ENCODE measurements at regions of chr12 and their contacts with region 1.

Region 1: DNA sequence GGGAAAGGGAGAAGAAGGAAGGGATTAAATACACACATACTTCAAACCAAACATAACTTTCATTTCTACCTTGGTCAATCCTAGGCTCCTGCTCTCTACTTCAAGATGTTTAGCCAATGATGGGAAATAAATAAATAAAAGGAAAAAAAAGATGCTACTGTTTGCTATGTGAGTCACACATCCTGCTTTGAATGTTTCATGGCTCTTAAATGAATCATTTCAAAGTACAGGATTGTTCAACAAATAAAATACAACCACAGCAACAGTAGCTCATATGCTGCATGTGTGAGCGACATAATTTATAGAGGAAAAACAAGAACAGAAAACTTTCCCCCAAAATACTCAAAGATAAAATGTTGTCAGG is 54.3 kb upstream of the NPFF start:
- DNase-seq: peak; percentile 81
- H3K4me3 ChIP-seq: no peak overlapping the region
- H3K27ac ChIP-seq: peak overlapping the region; percentile 61
- H3K4me1 ChIP-seq: peaks cover 23% of the 10 kb centered on the region
- H3K27me3 ChIP-seq: no peaks in the 10 kb centered on the region
- CTCF ChIP-seq: no peak

Region 2: GRCh38 chr12:53391729-53392128 is 169.8 kb before region 1 on chr12:
- CTCF ChIA-PET with region 1: no interaction called
- dilution Hi-C with region 1: no loop called
- in situ Hi-C with region 1: no loop called
- intact Hi-C with region 1: no loop called
- DNase-seq: no peak
- H3K4me3 ChIP-seq: no peak overlapping the region
- H3K27ac ChIP-seq: no peak overlapping the region
- H3K4me1 ChIP-seq: peaks cover 8% of the 10 kb centered on the region
- H3K27me3 ChIP-seq: no peaks in the 10 kb centered on the region
- CTCF ChIP-seq: no peak

Region 3: GRCh38 chr12:53538196-53538689 is 23.3 kb before region 1 on chr12:
- CTCF ChIA-PET with region 1: no interaction called
- dilution Hi-C with region 1: no loop called
- in situ Hi-C with region 1: no loop called
- intact Hi-C with region 1: no loop called
- DNase-seq: peak; percentile 54
- H3K4me3 ChIP-seq: no peak overlapping the region
- H3K27ac ChIP-seq: no peak overlapping the region
- H3K4me1 ChIP-seq: peaks cover 9% of the 10 kb centered on the region
- H3K27me3 ChIP-seq: no peaks in the 10 kb centered on the region
- CTCF ChIP-seq: no peak

Region 4: DNA sequence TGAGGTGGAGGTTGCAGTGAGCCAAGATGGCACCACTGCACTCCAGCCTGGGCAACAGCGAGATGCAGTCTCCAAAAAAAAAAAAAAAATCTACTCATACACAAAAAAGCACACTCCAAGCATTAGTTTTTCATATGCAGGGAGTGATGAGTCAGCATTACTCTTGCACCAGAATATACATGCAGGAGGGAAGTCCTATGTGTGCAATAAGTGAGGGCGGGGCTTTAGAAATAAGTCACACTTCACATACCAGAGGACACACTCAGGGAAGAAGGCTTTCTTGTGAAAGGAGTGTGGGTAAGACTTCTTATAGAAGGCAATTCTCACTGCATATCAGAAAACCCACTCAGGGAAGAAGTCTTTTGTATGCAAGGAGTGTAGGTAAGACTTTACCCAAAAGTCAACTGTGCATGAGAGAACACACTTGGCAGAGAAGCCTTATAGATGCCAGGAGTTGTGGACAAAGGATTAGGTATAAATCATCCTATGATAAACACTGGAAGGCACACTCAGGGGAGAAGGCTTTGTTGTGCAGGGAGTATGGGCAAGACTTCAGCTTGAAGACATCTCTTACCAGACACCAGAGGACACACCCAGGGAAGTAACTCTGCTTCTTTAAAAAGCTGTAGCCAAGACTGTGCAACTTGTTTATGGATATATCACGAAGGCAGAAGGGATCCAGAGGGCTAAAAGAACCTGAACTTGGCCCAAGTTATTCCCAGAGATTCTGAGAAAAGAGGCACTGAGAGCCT is 14.1 kb after region 1 on chr12:
- CTCF ChIA-PET with region 1: no interaction called
- dilution Hi-C with region 1: no loop called
- in situ Hi-C with region 1: no loop called
- intact Hi-C with region 1: loop called (anchors 1 kb)
- DNase-seq: peak; percentile 87
- H3K4me3 ChIP-seq: no peak overlapping the region
- H3K27ac ChIP-seq: no peak overlapping the region
- H3K4me1 ChIP-seq: peaks cover 9% of the 10 kb centered on the region
- H3K27me3 ChIP-seq: no peaks in the 10 kb centered on the region
- CTCF ChIP-seq: no peak

Measured in mammary epithelial cell (primary cell).